AG04450 (cell line): ENCODE measurements at regions of chr19 and their contacts with region 1.

Region 1: DNA sequence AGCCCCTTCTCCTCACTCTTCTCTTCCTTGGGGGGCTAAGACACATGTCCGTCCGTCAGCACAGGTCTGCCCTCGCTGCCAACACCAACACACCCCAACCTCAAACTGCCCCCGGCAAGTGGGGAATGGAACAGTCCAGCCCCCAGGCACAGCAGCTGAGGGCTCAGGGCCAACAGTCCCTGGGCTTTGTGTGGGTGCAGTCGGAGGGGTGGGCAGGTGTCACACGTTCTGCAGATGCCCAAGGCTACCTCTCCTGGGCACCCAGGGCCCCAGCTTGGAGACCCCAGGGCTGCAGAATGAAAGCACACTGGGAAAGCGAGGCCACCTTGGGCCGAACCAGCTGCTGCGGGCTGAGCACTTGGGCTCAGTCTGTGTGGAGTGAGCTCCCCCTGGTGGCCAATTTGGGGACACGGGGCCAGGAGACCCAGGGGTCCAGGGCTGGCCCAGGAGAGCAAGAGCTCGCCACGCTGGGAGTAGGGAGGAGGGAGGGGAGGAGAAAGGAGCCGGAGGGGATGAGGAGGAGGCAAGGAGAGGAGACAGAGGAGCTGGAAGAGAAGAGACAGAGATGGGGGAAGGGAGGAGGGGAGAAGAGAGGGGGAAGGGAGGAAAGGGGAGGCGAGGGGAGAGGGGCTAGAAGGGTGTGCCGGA is 14.0 kb upstream of the ATP8B3 start:
- DNase-seq: peak; percentile 36
- H3K4me3 ChIP-seq: no peak overlapping the region
- H3K27ac ChIP-seq: no peak overlapping the region
- H3K27me3 ChIP-seq: no peaks in the 10 kb centered on the region
- CTCF ChIP-seq: peak; percentile 87

Region 2: GRCh38 chr19:1540365-1540925 is 285.6 kb before region 1 on chr19:
- CTCF ChIA-PET with region 1: interaction called, 19 read pairs
- POLR2A ChIA-PET with region 1: no interaction called
- DNase-seq: no peak
- H3K4me3 ChIP-seq: no peak overlapping the region
- H3K27ac ChIP-seq: no peak overlapping the region
- H3K27me3 ChIP-seq: peaks cover 11% of the 10 kb centered on the region
- CTCF ChIP-seq: no peak

Region 3: DNA sequence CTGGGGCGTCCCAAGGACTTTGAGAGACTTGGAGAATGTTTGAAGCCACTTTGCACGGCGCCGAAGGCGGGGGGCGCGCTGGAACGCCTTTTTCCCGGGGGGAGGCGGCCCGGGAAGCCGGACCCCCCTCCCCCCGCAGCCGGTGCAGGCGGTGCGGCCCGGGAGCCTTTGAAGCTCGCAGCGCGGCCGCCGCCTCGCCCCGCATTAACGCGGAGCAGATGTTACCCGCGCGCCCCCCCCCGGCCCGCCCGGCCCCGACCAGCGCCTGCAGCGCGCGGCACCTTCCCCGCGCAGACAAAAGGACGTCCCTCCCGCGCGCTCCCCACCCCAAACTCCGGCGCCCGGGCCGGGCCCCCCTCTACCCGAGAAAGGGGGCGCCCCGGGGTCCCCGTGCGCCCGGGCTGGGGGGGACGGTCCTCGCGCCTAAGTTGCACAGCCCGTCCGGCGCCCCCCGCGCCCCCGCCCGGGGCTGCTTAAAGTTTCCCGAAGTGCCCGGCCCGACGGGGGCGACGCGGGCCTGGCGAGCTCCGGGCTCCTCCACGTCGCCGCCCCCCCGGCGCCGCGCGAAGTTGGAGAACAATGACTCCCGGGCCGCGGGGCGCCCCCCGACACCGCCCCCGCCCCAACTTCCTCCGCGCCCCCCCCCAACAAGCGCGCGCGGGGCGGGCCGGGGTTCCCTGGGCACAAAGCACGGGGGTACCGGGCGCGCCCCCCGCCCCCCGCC is 174.3 kb before region 1 on chr19:
- CTCF ChIA-PET with region 1: no interaction called
- POLR2A ChIA-PET with region 1: no interaction called
- DNase-seq: no peak
- H3K4me3 ChIP-seq: peak overlapping the region; percentile 73
- H3K27ac ChIP-seq: no peak overlapping the region
- H3K27me3 ChIP-seq: no peaks in the 10 kb centered on the region
- CTCF ChIP-seq: no peak

Region 4: DNA sequence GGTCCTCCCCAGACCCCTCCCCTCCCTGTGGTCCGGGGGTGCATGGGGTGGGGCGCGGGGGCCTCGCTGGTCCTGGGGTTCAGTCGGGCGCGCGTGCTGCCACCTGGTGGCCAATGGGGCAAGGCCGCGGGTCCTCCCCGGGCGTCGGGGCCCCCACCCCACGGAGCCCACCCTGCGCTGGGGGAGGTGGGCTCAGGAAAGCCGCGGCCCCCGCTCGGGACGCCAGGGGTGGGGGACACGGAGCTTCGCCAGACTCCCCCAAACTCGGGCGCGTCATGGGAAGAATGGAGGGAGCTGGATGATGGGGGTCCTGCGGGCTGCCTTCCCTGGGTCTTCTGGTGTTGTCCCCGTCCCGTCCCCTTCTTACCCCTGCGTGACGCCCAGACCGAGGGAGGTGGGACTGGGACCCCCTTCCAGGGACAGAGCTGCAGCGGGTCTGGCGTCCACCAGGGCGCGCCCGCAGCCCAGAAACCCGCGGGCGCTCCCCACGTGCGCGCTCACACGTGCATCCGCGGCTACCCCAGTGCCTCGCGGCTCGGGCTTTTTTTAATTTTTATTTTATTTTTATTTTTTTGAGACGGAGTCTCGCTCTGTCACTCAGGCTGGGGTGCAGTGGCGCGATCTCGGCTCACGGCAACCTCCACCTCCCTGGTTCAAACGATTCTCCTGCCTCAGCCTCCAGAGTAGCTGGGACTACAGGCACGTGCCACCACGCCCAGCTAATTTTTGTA is 153.8 kb before region 1 on chr19:
- CTCF ChIA-PET with region 1: interaction called, 14 read pairs
- POLR2A ChIA-PET with region 1: no interaction called
- DNase-seq: no peak
- H3K4me3 ChIP-seq: peak overlapping the region; percentile 32
- H3K27ac ChIP-seq: no peak overlapping the region
- H3K27me3 ChIP-seq: peaks cover 67% of the 10 kb centered on the region
- CTCF ChIP-seq: peak; percentile 72

Region 5: DNA sequence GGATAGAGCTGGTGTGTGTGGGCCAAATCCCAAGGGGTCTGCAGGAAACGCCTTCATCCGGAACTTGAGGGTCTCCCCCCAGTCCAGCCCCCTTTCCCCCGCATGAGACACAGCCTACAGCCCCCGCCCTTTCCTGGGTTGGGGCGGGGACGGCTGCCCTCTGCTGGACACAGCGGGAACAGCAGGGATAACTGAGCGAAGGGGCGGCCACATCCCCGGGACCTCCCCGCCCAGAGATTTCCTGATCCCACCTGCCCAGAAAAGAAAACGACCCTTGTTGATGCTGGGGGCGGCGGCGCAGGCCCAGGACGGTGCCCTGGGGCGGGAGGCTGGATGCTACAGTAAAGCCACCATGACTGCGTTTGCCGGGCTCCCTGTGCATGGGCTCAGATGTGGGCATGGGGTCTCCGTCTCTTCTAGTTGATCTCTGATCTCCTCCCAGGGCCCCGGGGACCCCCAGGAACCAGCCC is 58.5 kb before region 1 on chr19:
- CTCF ChIA-PET with region 1: interaction called, 14 read pairs
- POLR2A ChIA-PET with region 1: no interaction called
- DNase-seq: no peak
- H3K4me3 ChIP-seq: no peak overlapping the region
- H3K27ac ChIP-seq: no peak overlapping the region
- H3K27me3 ChIP-seq: peaks cover 65% of the 10 kb centered on the region
- CTCF ChIP-seq: peak; percentile 93

Region 6: DNA sequence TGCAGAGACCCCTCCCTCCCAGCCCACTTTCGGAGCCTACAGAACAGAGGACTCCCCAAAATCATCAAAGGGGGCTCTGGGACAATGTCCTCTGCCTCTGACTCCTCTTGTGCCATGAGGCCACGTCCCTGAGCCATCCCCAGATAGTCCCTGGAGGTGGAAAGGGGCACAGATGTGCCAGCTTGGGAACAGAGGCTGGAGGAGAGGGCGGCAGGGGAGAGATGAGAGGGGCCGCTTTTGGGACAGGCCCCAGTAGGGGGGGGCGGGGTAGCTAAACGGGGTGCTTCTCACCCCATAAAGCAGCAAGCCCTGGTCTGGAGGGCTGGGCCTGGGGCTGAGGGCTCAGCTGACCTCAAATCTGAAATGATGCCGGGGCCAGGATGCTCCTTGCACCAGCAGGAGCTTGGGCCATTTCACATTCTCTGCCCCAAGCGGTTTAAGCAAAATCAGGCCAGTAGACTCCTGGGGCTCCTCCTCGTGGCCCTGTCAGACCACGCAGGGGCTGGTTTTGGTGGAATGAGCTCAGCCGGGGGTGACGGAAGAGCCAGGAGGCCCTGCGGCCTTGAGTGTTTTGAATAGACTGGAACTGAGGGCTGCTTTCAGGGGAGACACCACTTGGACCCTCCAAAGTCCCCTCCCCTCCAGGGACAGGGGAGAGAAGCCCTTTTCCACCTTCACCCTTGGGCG is 45.6 kb before region 1 on chr19:
- CTCF ChIA-PET with region 1: interaction called, 12 read pairs
- POLR2A ChIA-PET with region 1: no interaction called
- DNase-seq: no peak
- H3K4me3 ChIP-seq: no peak overlapping the region
- H3K27ac ChIP-seq: no peak overlapping the region
- H3K27me3 ChIP-seq: peaks cover 56% of the 10 kb centered on the region
- CTCF ChIP-seq: peak; percentile 45

Region 7: GRCh38 chr19:1837625-1838105 is 11.6 kb after region 1 on chr19:
- CTCF ChIA-PET with region 1: interaction called, 68 read pairs
- POLR2A ChIA-PET with region 1: interaction called, 9 read pairs
- DNase-seq: no peak
- H3K4me3 ChIP-seq: no peak overlapping the region
- H3K27ac ChIP-seq: no peak overlapping the region
- H3K27me3 ChIP-seq: no peaks in the 10 kb centered on the region
- CTCF ChIP-seq: peak; percentile 86

Region 8: GRCh38 chr19:1848399-1849131 is 22.5 kb after region 1 on chr19 and contains the start of gene REXO1:
- CTCF ChIA-PET with region 1: interaction called, 12 read pairs
- POLR2A ChIA-PET with region 1: no interaction called
- DNase-seq: peak; percentile 81
- H3K4me3 ChIP-seq: peak within 1 kb of the TSS; percentile 96
- H3K27ac ChIP-seq: peak within 1 kb of the TSS; percentile 91
- H3K27me3 ChIP-seq: no peaks in the 10 kb centered on the region
- CTCF ChIP-seq: peak; percentile 87
- polyA plus RNA-seq, gene REXO1: 5.4 and 8.4 TPM in 2 replicates